ENCODE measurements at regions of chr5 and their contacts with region 1.

Region 1: DNA sequence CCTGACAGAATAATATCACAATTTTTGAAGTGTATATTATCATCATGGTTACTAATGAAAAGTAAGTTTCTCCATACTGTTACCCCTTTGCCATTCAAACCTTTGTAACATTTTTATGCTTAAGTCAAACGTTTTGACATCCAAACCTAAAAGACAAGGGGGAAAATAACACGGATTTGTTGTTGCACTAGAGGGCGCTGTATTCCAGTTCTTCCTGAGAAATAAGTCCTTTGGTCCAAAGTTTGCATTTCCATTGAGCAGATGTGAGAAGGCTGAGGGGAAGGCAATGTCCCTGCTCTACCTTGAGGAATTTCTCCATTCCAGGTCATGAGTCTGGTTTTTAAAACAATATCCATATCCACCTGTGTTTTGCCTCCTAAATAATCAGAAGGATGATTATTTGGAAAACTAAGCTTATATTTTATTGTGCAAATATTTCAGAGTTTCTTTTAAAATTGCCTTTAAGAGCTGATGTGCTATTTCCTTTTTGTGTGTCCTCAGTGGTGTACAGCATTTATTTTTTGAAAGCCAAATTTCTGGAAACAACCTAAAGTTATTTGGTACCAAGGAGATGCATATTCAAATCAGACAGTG is 9.7 kb downstream of the LECT2 start:
- DNase-seq: peak; percentile 86
- ATAC-seq: peak; percentile 57
- H3K4me3 ChIP-seq: no peak overlapping the region
- H3K27ac ChIP-seq: no peak overlapping the region
- H3K4me1 ChIP-seq: peaks cover 13% of the 10 kb centered on the region
- H3K27me3 ChIP-seq: no peaks in the 10 kb centered on the region
- CTCF ChIP-seq: peak; percentile 89
- EP300 ChIP-seq: 0 out of 4 replicates have a peak, but pooled peaks of 1 of the 2 experiments have one; percentile 8
- POLR2A ChIP-seq: no peak
- RAD21 ChIP-seq: peak; percentile 86

Region 2: DNA sequence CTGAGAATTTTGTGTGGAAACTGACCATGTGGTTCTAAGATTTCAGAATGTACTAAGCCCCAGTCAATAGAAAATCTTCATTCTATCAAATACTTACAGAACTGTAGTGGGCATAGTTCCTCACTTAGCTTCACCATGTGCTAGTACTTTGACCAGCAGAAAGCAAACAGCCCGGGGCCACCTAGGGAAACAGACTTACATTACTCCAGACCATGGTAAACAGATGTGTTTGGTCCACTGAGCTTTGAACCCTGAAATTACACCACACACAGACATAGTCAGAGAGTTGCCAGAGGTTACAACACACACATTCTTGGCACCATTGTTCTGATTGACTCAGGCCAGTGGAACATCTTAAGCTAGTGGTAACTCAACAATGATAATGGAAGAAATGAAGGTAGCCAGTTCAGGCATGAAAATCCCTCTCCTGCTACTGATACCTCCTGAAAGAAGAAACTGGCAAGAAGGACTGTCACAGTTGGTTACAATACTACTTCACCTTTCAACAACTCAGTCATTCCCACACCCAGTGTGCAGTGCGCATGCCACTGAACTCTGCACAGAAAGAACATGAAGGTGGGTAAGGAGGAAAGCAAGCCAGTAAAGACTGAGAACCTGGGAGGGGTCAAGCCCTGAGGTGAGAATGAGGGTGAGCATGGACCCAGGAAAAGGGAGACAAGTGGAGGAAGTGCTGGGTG is 28.4 kb after region 1 on chr5:
- CTCF ChIA-PET with region 1: no interaction called
- POLR2A ChIA-PET with region 1: interaction called, 4 read pairs
- in situ Hi-C with region 1: no loop called
- intact Hi-C with region 1: loop called (anchors 1 kb)
- DNase-seq: peak; percentile 99
- ATAC-seq: peak; percentile 97
- H3K4me3 ChIP-seq: peak overlapping the region; percentile 7 to 49 (median 20); a peak in 5 of 6 replicates
- H3K27ac ChIP-seq: peak overlapping the region; percentile 98
- H3K4me1 ChIP-seq: peaks cover 55% of the 10 kb centered on the region
- H3K27me3 ChIP-seq: no peaks in the 10 kb centered on the region
- CTCF ChIP-seq: peak; percentile 32; the same call in 1 of the 2 replicates
- EP300 ChIP-seq: peak; percentile 96 to 99
- POLR2A ChIP-seq: peak; percentile 33 to 47; a peak in 2 of 4 replicates
- RAD21 ChIP-seq: peak; percentile 29; the same call in 1 of the 2 replicates

Region 3: GRCh38 chr5:135986891-135987401 is 41.9 kb after region 1 on chr5:
- CTCF ChIA-PET with region 1: interaction called, 23 read pairs
- POLR2A ChIA-PET with region 1: no interaction called
- in situ Hi-C with region 1: no loop called
- intact Hi-C with region 1: loop called (anchors 1 kb)
- DNase-seq: no peak
- ATAC-seq: no peak
- H3K4me3 ChIP-seq: no peak overlapping the region
- H3K27ac ChIP-seq: no peak overlapping the region
- H3K4me1 ChIP-seq: peaks cover 10% of the 10 kb centered on the region
- H3K27me3 ChIP-seq: no peaks in the 10 kb centered on the region
- CTCF ChIP-seq: no peak
- EP300 ChIP-seq: no peak
- POLR2A ChIP-seq: no peak
- RAD21 ChIP-seq: no peak

Region 4: GRCh38 chr5:135997673-135998335 is 52.7 kb after region 1 on chr5:
- CTCF ChIA-PET with region 1: no interaction called
- POLR2A ChIA-PET with region 1: no interaction called
- in situ Hi-C with region 1: no loop called
- intact Hi-C with region 1: no loop called
- DNase-seq: no peak
- ATAC-seq: no peak
- H3K4me3 ChIP-seq: no peak overlapping the region
- H3K27ac ChIP-seq: no peak overlapping the region
- H3K4me1 ChIP-seq: peaks cover 36% of the 10 kb centered on the region
- H3K27me3 ChIP-seq: no peaks in the 10 kb centered on the region
- CTCF ChIP-seq: no peak
- EP300 ChIP-seq: no peak
- POLR2A ChIP-seq: no peak
- RAD21 ChIP-seq: no peak

Region 5: DNA sequence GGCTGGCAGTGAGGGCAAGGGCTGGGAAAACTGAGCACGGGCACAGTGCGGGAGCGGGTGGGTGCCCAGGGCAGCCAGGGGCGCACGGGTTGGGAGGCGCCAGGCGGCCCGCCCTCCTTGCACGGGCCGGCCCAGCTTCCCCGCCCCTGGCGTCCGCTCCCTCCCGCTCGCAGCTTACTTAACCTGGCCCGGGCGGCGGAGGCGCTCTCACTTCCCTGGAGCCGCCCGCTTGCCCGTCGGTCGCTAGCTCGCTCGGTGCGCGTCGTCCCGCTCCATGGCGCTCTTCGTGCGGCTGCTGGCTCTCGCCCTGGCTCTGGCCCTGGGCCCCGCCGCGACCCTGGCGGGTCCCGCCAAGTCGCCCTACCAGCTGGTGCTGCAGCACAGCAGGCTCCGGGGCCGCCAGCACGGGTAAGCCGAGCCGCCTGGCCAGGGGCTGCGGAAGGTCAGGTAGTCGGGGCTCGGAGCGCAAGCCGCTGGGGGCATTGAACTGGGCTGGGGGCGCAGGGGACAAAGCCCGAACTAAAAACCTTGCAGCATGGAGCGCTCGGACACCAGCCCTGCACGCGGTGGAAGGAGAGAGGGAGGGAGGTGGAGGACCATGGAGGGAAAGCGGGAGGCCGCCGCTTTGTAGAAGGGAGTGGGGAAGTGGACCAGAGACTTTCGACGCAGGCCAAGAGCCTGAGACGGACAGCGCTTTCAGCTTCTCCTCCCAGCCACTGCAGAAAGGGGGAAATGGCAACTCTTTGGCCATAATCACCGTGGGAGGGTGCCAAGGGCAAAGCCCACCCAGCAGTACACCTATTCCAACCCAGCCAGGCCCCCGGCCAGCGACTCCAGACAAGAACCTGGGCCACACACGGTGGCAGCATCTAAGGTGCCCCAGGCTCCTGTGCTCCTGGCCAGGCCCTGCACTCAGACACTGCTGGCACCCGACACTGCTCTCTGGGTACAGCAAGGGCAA is 84.0 kb after region 1 on chr5 and contains the start of gene TGFBI:
- CTCF ChIA-PET with region 1: no interaction called
- POLR2A ChIA-PET with region 1: no interaction called
- in situ Hi-C with region 1: no loop called
- intact Hi-C with region 1: no loop called
- DNase-seq: peak; percentile 61
- ATAC-seq: peak; percentile 95
- H3K4me3 ChIP-seq: peak within 1 kb of the TSS; percentile 80 to 85 (median 84)
- H3K27ac ChIP-seq: peak within 1 kb of the TSS; percentile 61
- H3K4me1 ChIP-seq: peaks cover 56% of the 10 kb centered on the region
- H3K27me3 ChIP-seq: no peaks in the 10 kb centered on the region; a peak in 2 of 5 replicates
- CTCF ChIP-seq: peak; percentile 70
- EP300 ChIP-seq: no peak
- POLR2A ChIP-seq: peak; percentile 82 to 94
- RAD21 ChIP-seq: peak; percentile 75
- total RNA-seq, gene TGFBI: 138 and 275 TPM in 2 replicates

Region 6: GRCh38 chr5:136080483-136081216 is 135.6 kb after region 1 on chr5:
- CTCF ChIA-PET with region 1: interaction called, 27 read pairs
- POLR2A ChIA-PET with region 1: no interaction called
- in situ Hi-C with region 1: no loop called
- intact Hi-C with region 1: loop called (anchors 1 kb)
- DNase-seq: no peak
- ATAC-seq: no peak
- H3K4me3 ChIP-seq: no peak overlapping the region
- H3K27ac ChIP-seq: no peak overlapping the region
- H3K4me1 ChIP-seq: peaks cover 29% of the 10 kb centered on the region
- H3K27me3 ChIP-seq: no peaks in the 10 kb centered on the region
- CTCF ChIP-seq: no peak
- EP300 ChIP-seq: no peak
- POLR2A ChIP-seq: no peak
- RAD21 ChIP-seq: no peak

Region 7: GRCh38 chr5:136123236-136123768 is 178.2 kb after region 1 on chr5:
- CTCF ChIA-PET with region 1: no interaction called
- POLR2A ChIA-PET with region 1: no interaction called
- in situ Hi-C with region 1: no loop called
- intact Hi-C with region 1: no loop called
- DNase-seq: peak; percentile 94
- ATAC-seq: peak; percentile 86
- H3K4me3 ChIP-seq: peak overlapping the region in 1 of 3 experiments; percentile 19; a peak in 1 of 6 replicates
- H3K27ac ChIP-seq: peak overlapping the region; percentile 13
- H3K4me1 ChIP-seq: peaks cover 39% of the 10 kb centered on the region
- H3K27me3 ChIP-seq: no peaks in the 10 kb centered on the region
- CTCF ChIP-seq: no peak
- EP300 ChIP-seq: peak in 1 of 2 experiments; percentile 52; a peak in 2 of 4 replicates
- POLR2A ChIP-seq: no peak
- RAD21 ChIP-seq: no peak

Region 8: DNA sequence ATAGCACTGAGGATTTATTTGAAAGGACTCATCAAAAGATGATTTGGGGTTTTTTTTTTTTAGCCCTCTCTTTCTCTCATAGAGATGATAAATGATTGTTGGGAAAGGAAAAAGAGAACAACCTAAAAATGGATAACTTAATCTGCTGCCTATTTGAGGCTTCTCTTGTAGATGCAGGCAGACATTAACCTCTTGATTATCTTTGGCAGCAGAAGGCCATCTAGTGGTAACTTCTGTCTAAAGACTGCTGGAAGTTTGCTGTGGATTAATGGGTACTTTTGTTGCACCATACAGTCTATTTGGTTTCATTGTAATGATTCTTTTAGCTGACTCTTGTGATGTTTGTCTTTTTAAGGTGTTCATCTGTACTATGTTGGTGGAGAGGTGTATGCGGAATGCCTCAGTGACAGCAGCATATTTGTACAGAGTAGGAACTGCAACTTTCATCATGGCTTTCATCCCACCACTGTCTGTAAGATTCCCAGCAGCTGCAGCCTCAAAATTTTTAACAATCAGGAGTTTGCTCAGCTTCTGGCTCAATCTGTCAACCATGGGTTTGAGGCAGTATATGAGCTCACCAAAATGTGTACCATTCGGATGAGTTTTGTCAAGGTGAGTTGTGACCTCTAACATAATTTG is 229.1 kb after region 1 on chr5:
- CTCF ChIA-PET with region 1: interaction called, 5 read pairs
- POLR2A ChIA-PET with region 1: no interaction called
- in situ Hi-C with region 1: no loop called
- intact Hi-C with region 1: loop called (anchors 1 kb)
- DNase-seq: peak; percentile 67
- ATAC-seq: peak; percentile 90
- H3K4me3 ChIP-seq: no peak overlapping the region
- H3K27ac ChIP-seq: no peak overlapping the region
- H3K4me1 ChIP-seq: no peaks in the 10 kb centered on the region
- H3K27me3 ChIP-seq: no peaks in the 10 kb centered on the region
- CTCF ChIP-seq: peak; percentile 72
- EP300 ChIP-seq: no peak
- POLR2A ChIP-seq: no peak
- RAD21 ChIP-seq: peak; percentile 54

Measured in HepG2 (cell line).